HCT116 (cell line): ENCODE measurements at regions of chr4 and their contacts with region 1.

Region 1: DNA sequence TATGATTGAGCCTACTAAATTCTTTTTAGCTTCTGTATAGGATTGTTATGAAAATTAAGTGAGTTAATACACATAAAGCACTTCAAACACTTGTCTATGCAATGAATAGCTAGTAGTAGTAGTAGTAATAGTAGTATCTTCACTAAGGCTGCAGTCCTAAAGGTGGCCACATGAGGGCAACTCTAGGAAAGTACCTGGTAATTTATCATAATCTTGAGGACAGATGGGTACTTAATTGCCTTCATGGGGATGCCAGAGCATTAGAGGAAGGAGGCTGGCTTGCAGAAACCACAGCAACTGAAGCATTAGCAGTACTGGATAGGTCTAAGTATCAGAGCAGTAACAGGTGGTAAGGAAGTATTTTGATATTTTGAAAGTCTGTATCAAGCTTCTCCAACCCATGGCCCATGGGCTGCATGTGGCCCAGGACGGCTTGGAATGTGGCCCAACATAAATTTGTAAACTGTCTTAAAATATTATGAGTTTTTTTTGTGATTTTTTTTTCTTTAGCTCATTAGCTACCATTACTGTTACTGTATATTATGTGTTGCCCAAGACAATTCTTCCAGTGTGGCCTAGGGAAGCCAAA is 17.3 kb downstream of the NIPAL1 start:
- DNase-seq: peak; percentile 10
- ATAC-seq: peak; percentile 84
- H3K4me3 ChIP-seq: no peak overlapping the region
- H3K27ac ChIP-seq: no peak overlapping the region
- H3K4me1 ChIP-seq: no peaks in the 10 kb centered on the region
- H3K27me3 ChIP-seq: no peaks in the 10 kb centered on the region
- CTCF ChIP-seq: peak; percentile 23 to 71 (median 67); a peak in 5 of 6 replicates
- POLR2A ChIP-seq: no peak
- RAD21 ChIP-seq: peak; percentile 31; the same call in 1 of the 2 replicates

Region 2: DNA sequence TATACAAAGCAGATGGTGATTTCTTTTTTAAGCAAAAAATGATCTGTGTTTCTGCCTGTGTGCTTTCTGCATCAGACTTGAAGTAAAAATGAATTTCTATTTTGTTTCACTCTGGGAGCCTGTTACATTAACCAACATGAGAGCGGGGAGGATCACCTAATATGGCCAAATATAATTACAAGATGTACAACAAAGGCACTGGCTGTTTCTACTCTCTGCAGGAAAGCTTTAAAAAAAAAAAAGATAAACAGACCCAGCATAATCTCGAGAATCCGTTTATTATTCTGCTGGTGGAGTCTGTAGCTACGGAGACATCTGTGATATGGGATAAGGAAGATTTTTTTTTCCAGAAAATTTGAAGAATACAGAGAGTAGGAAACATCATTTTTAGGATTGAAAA is 674.0 kb before region 1 on chr4:
- CTCF ChIA-PET with region 1: no interaction called
- POLR2A ChIA-PET with region 1: no interaction called
- RAD21 ChIA-PET with region 1: no interaction called
- intact Hi-C with region 1: no loop called
- DNase-seq: no peak
- ATAC-seq: no peak
- H3K4me3 ChIP-seq: no peak overlapping the region
- H3K27ac ChIP-seq: no peak overlapping the region
- H3K4me1 ChIP-seq: no peaks in the 10 kb centered on the region
- H3K27me3 ChIP-seq: peaks cover 50% of the 10 kb centered on the region; the same call in 1 of the 2 replicates
- CTCF ChIP-seq: no peak
- POLR2A ChIP-seq: no peak
- RAD21 ChIP-seq: no peak

Region 3: GRCh38 chr4:48047421-48047844 is 13.5 kb after region 1 on chr4:
- CTCF ChIA-PET with region 1: interaction called, 10 read pairs
- POLR2A ChIA-PET with region 1: no interaction called
- RAD21 ChIA-PET with region 1: no interaction called
- intact Hi-C with region 1: no loop called
- DNase-seq: no peak
- ATAC-seq: no peak
- H3K4me3 ChIP-seq: no peak overlapping the region
- H3K27ac ChIP-seq: no peak overlapping the region
- H3K4me1 ChIP-seq: no peaks in the 10 kb centered on the region; a peak in 1 of 4 replicates
- H3K27me3 ChIP-seq: no peaks in the 10 kb centered on the region
- CTCF ChIP-seq: no peak
- POLR2A ChIP-seq: no peak
- RAD21 ChIP-seq: no peak